Astrocyte of the cerebellum (primary cell): ENCODE measurements at regions of chr10 and their contacts with region 1.

Region 1: DNA sequence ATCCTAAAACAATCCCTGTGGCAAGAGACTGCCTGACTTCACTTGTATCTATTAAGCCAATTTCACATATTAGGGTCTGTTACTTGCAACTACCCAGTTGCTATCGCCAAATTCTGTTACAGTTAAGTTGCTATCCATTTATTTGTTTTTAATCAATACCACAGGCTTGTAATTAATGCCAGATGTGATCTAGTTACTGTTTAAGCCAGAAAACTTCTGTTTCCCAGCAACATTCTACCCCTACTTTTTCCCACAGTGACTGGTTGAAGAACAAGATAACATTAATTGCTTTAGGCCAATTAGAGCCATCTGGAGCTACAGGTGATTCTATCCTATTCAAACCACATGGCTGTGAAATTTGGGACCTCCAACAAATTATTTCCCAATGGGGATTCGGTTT is 131.3 kb downstream of the ALOX5 start:
- DNase-seq: no peak
- H3K4me3 ChIP-seq: no peak overlapping the region
- CTCF ChIP-seq: no peak

Region 2: DNA sequence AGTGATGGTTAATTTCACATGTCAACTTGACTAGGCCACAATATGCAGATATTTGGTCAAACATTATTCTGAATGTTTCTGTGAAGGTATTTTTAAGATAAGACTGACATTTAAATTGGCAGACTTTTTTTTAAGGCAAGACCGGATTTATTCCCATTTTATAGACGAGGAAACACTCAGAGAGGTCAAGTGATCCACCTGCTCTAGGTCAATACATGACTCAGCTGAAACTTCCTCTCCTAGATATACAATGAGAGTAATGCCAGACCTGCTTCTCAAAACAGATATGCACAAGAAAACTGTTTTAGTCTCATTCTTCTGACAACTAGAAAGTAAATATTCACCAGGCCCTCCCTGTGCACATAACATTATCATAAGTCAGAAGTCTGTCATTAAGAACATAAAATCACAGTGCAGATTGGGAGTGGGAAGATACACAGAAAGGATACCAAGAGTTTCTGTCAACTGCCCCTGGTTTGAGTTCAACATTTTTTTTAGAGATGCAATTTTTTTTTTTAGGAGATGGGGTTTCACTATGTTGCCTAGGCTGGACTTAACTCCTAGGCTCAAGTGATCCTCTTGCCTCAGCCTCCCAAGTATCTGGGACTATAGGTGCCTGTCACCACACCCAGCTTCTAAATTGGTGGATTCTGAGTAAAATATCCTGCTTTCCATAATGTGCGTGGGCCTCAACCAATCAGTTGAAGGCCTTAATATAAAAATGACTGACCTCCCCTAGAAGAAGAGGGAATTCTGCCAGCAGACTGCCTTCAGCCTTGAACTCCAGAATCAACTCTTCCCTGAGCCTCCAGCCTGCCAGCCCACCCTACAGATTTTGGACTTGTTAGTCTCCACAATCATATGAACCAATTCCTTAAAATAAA is 45.8 kb after region 1 on chr10:
- in situ Hi-C with region 1: no loop called
- DNase-seq: no peak
- H3K4me3 ChIP-seq: no peak overlapping the region
- CTCF ChIP-seq: no peak

Region 3: GRCh38 chr10:45561952-45562351 is 56.6 kb after region 1 on chr10:
- in situ Hi-C with region 1: loop called (anchors 10 kb)
- DNase-seq: no peak
- H3K4me3 ChIP-seq: no peak overlapping the region
- CTCF ChIP-seq: no peak